Right ventricle myocardium superior (tissue), 1 donor: ENCODE measurements at regions of chr13 and their contacts with region 1.

Region 1: DNA sequence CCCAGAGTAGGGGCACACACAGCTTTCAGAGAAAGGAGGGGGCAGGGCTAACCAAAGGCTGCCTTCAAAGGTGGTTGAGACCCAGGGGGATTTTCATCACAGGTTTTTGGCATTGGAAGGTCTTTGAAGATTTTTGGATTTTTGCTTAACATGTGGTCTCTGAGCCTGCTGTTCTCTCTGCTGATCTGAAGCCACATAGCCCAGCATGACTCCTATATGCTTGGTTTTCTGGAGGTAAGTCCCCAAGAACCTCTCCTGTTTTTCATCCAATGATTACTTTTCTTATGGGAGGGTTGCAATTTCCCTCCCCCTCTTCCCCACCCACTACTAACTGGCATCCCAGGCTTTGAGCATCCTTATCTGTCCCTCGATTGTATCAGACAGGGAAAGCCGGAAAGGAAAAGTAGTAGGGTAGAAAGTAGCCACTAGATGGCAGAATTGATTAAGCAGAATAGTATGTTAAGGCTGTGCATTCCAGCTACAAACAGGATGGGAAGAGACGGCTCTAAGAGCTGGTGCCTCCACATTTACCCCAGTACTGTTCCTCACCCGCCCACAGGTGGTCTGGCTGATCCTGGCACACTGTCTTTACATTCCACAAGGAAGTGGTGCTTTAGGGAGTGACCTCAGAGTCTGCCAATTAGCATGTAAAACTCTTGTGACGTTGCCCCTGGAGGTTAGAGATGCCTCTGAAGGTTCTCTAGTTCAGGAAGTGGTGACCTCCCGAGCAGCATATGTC is 218.9 kb upstream of the EDNRB start:
- DNase-seq: no peak
- ATAC-seq: peak; percentile 81

Region 2: GRCh38 chr13:78978381-78978998 is 840.9 kb after region 1 on chr13:
- intact Hi-C with region 1: loop called (anchors 5 kb)
- DNase-seq: no peak
- ATAC-seq: no peak